Spleen (tissue), 13 donors: ENCODE measurements at regions of chr3 and their contacts with region 1.

Region 1: DNA sequence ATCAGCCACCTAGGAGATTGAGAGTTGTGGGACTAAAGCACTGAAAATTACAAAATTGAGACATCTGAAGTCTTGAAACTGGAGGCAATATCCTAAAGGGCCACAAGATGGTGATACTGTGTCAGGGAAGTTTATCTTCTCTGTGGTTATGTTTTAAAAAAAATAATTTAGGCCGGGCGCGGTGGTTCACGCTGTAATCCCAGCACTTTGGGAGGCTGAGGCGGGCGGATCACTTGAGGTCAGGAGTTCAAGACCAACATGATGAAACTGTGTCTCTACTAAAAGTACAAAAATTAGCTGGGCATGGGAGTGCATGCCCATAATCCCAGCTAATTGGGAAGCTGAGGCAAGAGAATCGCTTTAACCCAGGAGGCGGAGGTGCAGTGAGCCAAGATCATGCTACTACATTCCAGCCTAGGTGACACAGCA is 17.9 kb upstream of the NIT2 start:
- DNase-seq: no peak
- H3K4me3 ChIP-seq: no peak overlapping the region
- H3K27ac ChIP-seq: peak overlapping the region in 3 of 8 donors; percentile 9 to 44 (median 31)
- H3K4me1 ChIP-seq: peaks cover 0 to 25% (median 12%) of the 10 kb centered on the region in 6 donors
- H3K27me3 ChIP-seq: no peaks in the 10 kb centered on the region
- CTCF ChIP-seq: peak; percentile 49 to 80 (median 64)
- POLR2A ChIP-seq: no peak

Region 2: DNA sequence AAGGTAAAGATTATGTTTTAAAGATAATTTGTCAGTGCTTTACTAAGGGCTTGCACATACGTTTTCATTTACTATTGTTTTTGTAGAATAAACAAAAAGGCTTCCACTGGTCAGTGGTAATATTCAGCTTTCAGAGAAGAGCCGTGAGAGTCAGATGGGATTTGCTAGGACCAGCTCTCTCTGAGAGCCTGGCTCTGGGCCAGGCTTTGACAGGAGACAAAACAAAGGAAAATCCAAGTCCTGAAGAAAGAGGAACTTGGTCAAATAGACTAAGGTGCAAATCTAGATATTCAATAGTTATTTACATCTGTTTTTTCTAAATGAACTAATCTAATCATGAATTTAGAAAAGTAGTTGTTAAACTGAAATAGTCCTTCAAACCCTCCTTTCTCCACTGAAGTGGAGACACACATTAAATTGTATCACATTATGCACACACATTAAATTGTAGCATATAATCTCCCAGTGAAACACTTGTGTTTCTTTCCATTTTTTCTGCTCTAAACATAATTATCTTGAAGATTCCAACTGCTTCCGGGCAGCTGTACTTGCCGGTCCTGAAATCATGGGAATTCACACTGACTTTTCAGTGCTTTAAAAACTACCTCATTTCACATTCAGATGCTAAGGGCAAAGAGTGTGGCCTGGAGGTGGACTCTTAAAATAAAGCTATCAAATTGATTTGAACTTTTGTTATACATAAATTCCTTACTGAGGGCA is 147.3 kb before region 1 on chr3:
- intact Hi-C with region 1: no loop called
- DNase-seq: no peak
- H3K4me3 ChIP-seq: no peak overlapping the region
- H3K27ac ChIP-seq: no peak overlapping the region
- H3K4me1 ChIP-seq: peaks cover 0 to 6% (median 0%) of the 10 kb centered on the region in 6 donors
- H3K27me3 ChIP-seq: no peaks in the 10 kb centered on the region
- CTCF ChIP-seq: no peak
- POLR2A ChIP-seq: no peak

Region 3: GRCh38 chr3:100590114-100590839 is 273.6 kb after region 1 on chr3:
- intact Hi-C with region 1: loop called (anchors 10 kb)
- DNase-seq: no peak
- H3K4me3 ChIP-seq: peak overlapping the region in 1 of 8 donors; percentile 31
- H3K27ac ChIP-seq: no peak overlapping the region
- H3K4me1 ChIP-seq: peaks cover 0 to 8% (median 2%) of the 10 kb centered on the region in 6 donors
- H3K27me3 ChIP-seq: no peaks in the 10 kb centered on the region
- CTCF ChIP-seq: peak; percentile 54 to 90 (median 84)
- POLR2A ChIP-seq: no peak

Region 4: GRCh38 chr3:100665230-100665629 is 348.6 kb after region 1 on chr3:
- intact Hi-C with region 1: no loop called
- DNase-seq: no peak
- H3K4me3 ChIP-seq: no peak overlapping the region
- H3K27ac ChIP-seq: no peak overlapping the region
- H3K4me1 ChIP-seq: no peaks in the 10 kb centered on the region
- H3K27me3 ChIP-seq: peaks cover 0 to 8% (median 0%) of the 10 kb centered on the region in 7 donors
- CTCF ChIP-seq: no peak
- POLR2A ChIP-seq: no peak

Region 5: GRCh38 chr3:100852840-100853239 is 536.2 kb after region 1 on chr3:
- intact Hi-C with region 1: no loop called
- DNase-seq: no peak
- H3K4me3 ChIP-seq: no peak overlapping the region
- H3K27ac ChIP-seq: no peak overlapping the region
- H3K4me1 ChIP-seq: no peaks in the 10 kb centered on the region
- H3K27me3 ChIP-seq: no peaks in the 10 kb centered on the region
- CTCF ChIP-seq: no peak
- POLR2A ChIP-seq: no peak